ENCODE measurements at regions of chr2 and their contacts with region 1.

Region 1: GRCh38 chr2:112749755-112750559 is 14.5 kb downstream of the CKAP2L start:
- DNase-seq: peak; percentile 82
- ATAC-seq: peak; percentile 93
- H3K4me3 ChIP-seq: no peak overlapping the region
- H3K4me3 Mint-ChIP-seq: no peak overlapping the region
- H3K27ac ChIP-seq: no peak overlapping the region
- H3K27ac Mint-ChIP-seq: peak overlapping the region; percentile 21
- H3K4me1 ChIP-seq: peaks cover 0 to 11% of the 10 kb centered on the region in 2 donors
- H3K4me1 Mint-ChIP-seq: peaks cover 13% of the 10 kb centered on the region
- H3K27me3 ChIP-seq: no peaks in the 10 kb centered on the region
- H3K27me3 Mint-ChIP-seq: no peaks in the 10 kb centered on the region
- CTCF ChIP-seq: peak; percentile 96

Region 2: GRCh38 chr2:112601751-112602150 is 148.2 kb before region 1 on chr2:
- CTCF ChIA-PET with region 1: interaction called, 14 read pairs
- POLR2A ChIA-PET with region 1: no interaction called
- intact Hi-C with region 1: no loop called
- DNase-seq: no peak
- ATAC-seq: no peak
- H3K4me3 ChIP-seq: no peak overlapping the region
- H3K4me3 Mint-ChIP-seq: no peak overlapping the region
- H3K27ac ChIP-seq: no peak overlapping the region
- H3K27ac Mint-ChIP-seq: no peak overlapping the region
- H3K4me1 ChIP-seq: peaks cover 0 to 5% of the 10 kb centered on the region in 2 donors
- H3K4me1 Mint-ChIP-seq: peaks cover 5% of the 10 kb centered on the region
- H3K27me3 ChIP-seq: no peaks in the 10 kb centered on the region
- H3K27me3 Mint-ChIP-seq: no peaks in the 10 kb centered on the region
- CTCF ChIP-seq: no peak

Region 3: DNA sequence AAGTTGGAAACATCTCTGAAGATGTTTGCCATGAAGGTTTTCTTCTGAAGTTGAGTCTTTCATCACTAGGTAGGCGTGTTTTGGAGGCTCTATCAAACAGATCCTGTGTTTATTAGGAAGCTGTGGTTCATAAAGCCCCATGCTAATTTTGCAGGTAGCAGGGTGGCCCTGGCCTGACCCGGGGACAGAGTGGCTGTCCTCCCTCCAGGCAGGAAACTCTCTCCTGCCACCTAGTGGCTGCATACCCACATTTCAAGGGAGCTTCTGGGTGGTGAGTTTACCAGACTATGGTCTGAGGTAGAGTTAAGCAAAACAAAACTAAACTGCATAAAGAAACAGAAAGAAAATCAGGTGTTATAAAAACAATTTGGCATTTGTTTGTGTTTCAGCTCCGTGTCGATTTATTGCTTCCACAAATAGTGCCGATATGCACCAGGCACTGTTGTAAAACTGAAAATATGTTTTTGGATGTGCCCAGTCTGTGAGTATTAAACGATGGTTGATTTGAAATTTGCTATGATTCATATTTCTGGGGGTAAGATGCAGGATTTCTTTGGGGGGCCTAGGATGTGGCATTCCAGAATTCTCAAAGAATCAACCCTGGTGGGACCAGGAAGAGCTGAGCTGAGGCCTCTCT is 135.0 kb after region 1 on chr2:
- CTCF ChIA-PET with region 1: interaction called, 299 read pairs
- POLR2A ChIA-PET with region 1: no interaction called
- intact Hi-C with region 1: loop called (anchors 1 kb)
- DNase-seq: peak; percentile 65
- ATAC-seq: peak; percentile 75
- H3K4me3 ChIP-seq: no peak overlapping the region
- H3K4me3 Mint-ChIP-seq: no peak overlapping the region
- H3K27ac ChIP-seq: no peak overlapping the region
- H3K27ac Mint-ChIP-seq: no peak overlapping the region
- H3K4me1 ChIP-seq: peaks cover 7 to 15% of the 10 kb centered on the region in 2 donors
- H3K4me1 Mint-ChIP-seq: peaks cover 14% of the 10 kb centered on the region
- H3K27me3 ChIP-seq: no peaks in the 10 kb centered on the region
- H3K27me3 Mint-ChIP-seq: no peaks in the 10 kb centered on the region
- CTCF ChIP-seq: peak; percentile 90

Region 4: GRCh38 chr2:112941753-112942658 is 192.0 kb after region 1 on chr2:
- CTCF ChIA-PET with region 1: interaction called, 31 read pairs
- POLR2A ChIA-PET with region 1: no interaction called
- intact Hi-C with region 1: no loop called
- DNase-seq: peak; percentile 59
- ATAC-seq: no peak
- H3K4me3 ChIP-seq: no peak overlapping the region
- H3K4me3 Mint-ChIP-seq: no peak overlapping the region
- H3K27ac ChIP-seq: no peak overlapping the region
- H3K27ac Mint-ChIP-seq: no peak overlapping the region
- H3K4me1 ChIP-seq: no peaks in the 10 kb centered on the region
- H3K4me1 Mint-ChIP-seq: no peaks in the 10 kb centered on the region
- H3K27me3 ChIP-seq: peaks cover 0 to 5% (median 2%) of the 10 kb centered on the region in 4 experiments
- H3K27me3 Mint-ChIP-seq: peaks cover 4% of the 10 kb centered on the region
- CTCF ChIP-seq: peak; percentile 46

Region 5: GRCh38 chr2:113370478-113371091 is 620.6 kb after region 1 on chr2:
- CTCF ChIA-PET with region 1: no interaction called
- POLR2A ChIA-PET with region 1: no interaction called
- intact Hi-C with region 1: loop called (anchors 5 kb)
- DNase-seq: peak; percentile 64
- ATAC-seq: peak; percentile 84
- H3K4me3 ChIP-seq: no peak overlapping the region
- H3K4me3 Mint-ChIP-seq: no peak overlapping the region
- H3K27ac ChIP-seq: no peak overlapping the region
- H3K27ac Mint-ChIP-seq: no peak overlapping the region
- H3K4me1 ChIP-seq: no peaks in the 10 kb centered on the region
- H3K4me1 Mint-ChIP-seq: peaks cover 14% of the 10 kb centered on the region
- H3K27me3 ChIP-seq: no peaks in the 10 kb centered on the region
- H3K27me3 Mint-ChIP-seq: no peaks in the 10 kb centered on the region
- CTCF ChIP-seq: peak; percentile 57